MCF 10A (cell line): ENCODE measurements at regions of chr17 and their contacts with region 1.

Region 1: GRCh38 chr17:63611354-63611753 is 10.7 kb downstream of the TACO1 start:
- DNase-seq: no peak
- H3K4me3 Mint-ChIP-seq: no peak overlapping the region
- H3K27ac Mint-ChIP-seq: no peak overlapping the region
- H3K4me1 Mint-ChIP-seq: no peaks in the 10 kb centered on the region
- H3K27me3 Mint-ChIP-seq: no peaks in the 10 kb centered on the region
- CTCF ChIP-seq: no peak

Region 2: DNA sequence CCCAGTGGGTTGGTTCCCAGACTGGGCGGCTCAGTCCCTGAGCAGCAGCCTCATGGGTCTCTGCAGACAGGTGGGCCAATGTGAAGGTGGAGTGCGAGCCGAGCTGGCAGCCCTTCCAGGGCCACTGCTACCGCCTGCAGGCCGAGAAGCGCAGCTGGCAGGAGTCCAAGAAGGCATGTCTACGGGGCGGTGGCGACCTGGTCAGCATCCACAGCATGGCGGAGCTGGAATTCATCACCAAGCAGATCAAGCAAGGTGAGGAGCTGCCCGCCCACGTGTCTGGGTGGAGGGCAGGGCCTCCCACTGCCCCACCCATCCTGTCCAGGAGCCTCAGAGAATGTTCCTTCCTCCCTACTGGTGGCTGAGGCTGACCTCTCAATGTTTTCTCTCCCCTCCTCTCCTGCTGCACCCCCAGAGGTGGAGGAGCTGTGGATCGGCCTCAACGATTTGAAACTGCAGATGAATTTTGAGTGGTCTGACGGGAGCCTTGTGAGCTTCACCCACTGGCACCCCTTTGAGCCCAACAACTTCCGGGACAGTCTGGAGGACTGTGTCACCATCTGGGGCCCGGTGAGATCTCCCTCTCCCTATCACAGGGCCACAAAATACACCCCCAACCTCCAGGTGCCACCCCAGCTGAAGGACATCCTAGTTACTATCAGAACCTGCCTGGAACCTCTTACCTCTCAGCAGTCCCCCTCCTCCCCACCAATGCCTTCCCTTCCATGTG is 939.6 kb before region 1 on chr17:
- CTCF ChIA-PET with region 1: interaction called, 4 read pairs
- POLR2A ChIA-PET with region 1: no interaction called
- intact Hi-C with region 1: loop called (anchors 10 kb)
- DNase-seq: peak; percentile 85
- H3K4me3 Mint-ChIP-seq: peak overlapping the region; percentile 63
- H3K27ac Mint-ChIP-seq: peak overlapping the region; percentile 89
- H3K4me1 Mint-ChIP-seq: peaks cover 28% of the 10 kb centered on the region
- H3K27me3 Mint-ChIP-seq: no peaks in the 10 kb centered on the region
- CTCF ChIP-seq: no peak

Region 3: DNA sequence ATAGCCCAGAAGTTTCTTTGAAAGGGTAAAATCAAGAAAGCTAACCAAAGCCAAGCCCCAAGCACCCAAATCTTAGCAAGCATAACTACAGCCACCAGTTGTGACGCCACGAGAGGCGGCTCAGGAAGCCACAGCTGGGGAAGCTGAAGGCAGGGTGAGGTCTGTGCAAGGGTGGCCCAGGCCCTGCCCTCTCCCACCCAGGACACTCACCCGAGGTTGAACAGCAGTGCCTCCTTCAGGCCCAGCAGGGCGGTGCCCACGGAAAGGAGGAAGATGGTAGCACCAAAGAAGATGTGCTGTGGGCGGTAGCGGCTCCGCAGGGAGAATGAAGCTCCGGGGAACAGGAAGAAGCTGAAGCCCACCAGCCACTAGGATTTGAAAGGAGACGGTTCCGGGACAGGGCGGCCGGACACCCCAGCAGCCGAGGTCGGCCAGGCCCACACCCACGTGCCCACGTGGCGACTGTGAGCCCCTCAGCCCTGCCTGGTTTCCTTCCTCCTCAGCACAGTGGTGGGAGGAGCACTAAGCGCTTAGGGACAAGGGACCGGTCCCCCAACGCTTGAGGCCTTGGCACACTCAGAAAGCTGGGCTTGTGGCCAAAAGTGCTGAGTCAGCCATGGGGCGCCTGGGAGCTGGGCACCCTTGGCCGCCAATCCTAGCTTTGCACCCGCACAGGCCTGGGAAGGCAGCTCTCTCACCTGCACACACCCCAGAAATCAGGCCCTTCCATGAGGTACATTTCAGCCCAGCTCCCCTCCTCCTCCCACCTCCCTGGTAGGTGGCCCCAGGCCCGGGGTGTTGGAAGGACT is 176.3 kb before region 1 on chr17:
- CTCF ChIA-PET with region 1: interaction called, 22 read pairs
- POLR2A ChIA-PET with region 1: no interaction called
- intact Hi-C with region 1: no loop called
- DNase-seq: peak; percentile 94
- H3K4me3 Mint-ChIP-seq: peak overlapping the region; percentile 13
- H3K27ac Mint-ChIP-seq: no peak overlapping the region
- H3K4me1 Mint-ChIP-seq: peaks cover 43% of the 10 kb centered on the region
- H3K27me3 Mint-ChIP-seq: no peaks in the 10 kb centered on the region
- CTCF ChIP-seq: peak; percentile 52

Region 4: DNA sequence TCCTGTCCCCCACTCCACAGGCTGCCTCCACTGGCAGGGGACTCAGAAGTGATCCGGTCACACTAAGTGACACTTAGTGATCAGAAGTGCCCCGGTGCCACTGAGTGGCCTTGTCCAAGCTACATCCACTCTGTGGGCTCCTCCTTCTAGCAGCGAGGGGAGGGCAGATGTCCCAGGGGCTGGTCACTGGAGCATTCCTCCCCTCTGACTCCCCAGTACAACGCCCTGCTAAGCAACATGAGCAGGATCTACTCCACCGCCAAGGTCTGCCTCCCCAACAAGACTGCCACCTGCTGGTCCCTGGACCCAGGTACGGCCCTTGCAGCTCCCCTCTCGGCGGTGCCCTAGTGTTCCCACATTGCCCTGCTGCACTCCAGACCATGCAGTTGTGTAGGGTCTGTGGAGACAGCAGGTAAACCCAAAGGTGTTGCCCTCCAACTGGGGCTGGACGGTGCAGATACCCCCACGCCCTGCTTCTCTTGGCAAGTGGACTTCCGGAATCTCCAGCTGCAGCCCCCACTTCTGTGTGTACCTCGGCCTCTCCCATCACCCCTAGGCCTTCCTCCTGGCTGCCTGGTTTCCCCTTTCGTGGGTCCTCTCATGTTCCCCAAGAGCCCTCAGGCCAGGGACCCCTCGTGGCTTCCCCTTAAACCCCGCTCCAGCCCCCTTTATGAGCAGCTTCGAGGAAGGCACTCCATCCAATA is 132.4 kb before region 1 on chr17:
- CTCF ChIA-PET with region 1: interaction called, 12 read pairs
- POLR2A ChIA-PET with region 1: no interaction called
- intact Hi-C with region 1: no loop called
- DNase-seq: peak; percentile 91
- H3K4me3 Mint-ChIP-seq: no peak overlapping the region
- H3K27ac Mint-ChIP-seq: no peak overlapping the region
- H3K4me1 Mint-ChIP-seq: no peaks in the 10 kb centered on the region
- H3K27me3 Mint-ChIP-seq: no peaks in the 10 kb centered on the region
- CTCF ChIP-seq: peak; percentile 88

Region 5: GRCh38 chr17:63600569-63601438 is 10.6 kb before region 1 on chr17 and contains the start of gene TACO1:
- CTCF ChIA-PET with region 1: interaction called, 14 read pairs
- POLR2A ChIA-PET with region 1: interaction called, 13 read pairs
- intact Hi-C with region 1: no loop called
- DNase-seq: peak; percentile 76
- H3K4me3 Mint-ChIP-seq: peak within 1 kb of the TSS; percentile 79
- H3K27ac Mint-ChIP-seq: peak within 1 kb of the TSS; percentile 88
- H3K4me1 Mint-ChIP-seq: peaks cover 4% of the 10 kb centered on the region
- H3K27me3 Mint-ChIP-seq: no peaks in the 10 kb centered on the region
- CTCF ChIP-seq: no peak
- total RNA-seq, gene TACO1: 36.5 and 38.7 TPM in 2 replicates

Region 6: DNA sequence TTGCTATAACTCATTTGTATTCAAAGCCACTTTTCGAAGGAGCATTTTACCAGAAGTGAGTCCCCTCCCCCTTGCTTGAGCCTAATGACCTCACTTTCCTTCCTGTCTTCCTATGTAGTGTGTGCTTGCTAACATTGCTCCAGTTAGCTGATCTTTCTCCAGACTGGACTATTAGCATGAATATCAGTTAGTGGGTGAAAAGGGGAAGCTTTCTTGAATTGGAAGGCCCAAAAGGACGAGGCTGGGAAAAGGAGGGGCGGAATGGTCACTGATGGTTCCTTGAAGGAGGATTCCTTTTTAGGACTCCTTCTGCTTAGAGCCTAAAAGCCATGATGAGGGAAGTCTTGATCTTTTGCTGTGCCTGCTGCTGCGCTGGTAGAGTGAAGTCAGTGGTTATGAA is 22.8 kb after region 1 on chr17:
- CTCF ChIA-PET with region 1: interaction called, 12 read pairs
- POLR2A ChIA-PET with region 1: no interaction called
- intact Hi-C with region 1: no loop called
- DNase-seq: no peak
- H3K4me3 Mint-ChIP-seq: no peak overlapping the region
- H3K27ac Mint-ChIP-seq: no peak overlapping the region
- H3K4me1 Mint-ChIP-seq: no peaks in the 10 kb centered on the region
- H3K27me3 Mint-ChIP-seq: no peaks in the 10 kb centered on the region
- CTCF ChIP-seq: no peak